Calu3 (cell line): ENCODE measurements at regions of chr3 and their contacts with region 1.

Region 1: GRCh38 chr3:177827511-177828207 is 630.4 kb upstream of the TBL1XR1 start:
- DNase-seq: peak; percentile 68
- H3K4me3 Mint-ChIP-seq: peak overlapping the region; percentile 48
- H3K27ac Mint-ChIP-seq: peak overlapping the region; percentile 85
- H3K4me1 Mint-ChIP-seq: peaks cover 77% of the 10 kb centered on the region
- H3K27me3 Mint-ChIP-seq: no peaks in the 10 kb centered on the region
- CTCF ChIP-seq: no peak

Region 2: DNA sequence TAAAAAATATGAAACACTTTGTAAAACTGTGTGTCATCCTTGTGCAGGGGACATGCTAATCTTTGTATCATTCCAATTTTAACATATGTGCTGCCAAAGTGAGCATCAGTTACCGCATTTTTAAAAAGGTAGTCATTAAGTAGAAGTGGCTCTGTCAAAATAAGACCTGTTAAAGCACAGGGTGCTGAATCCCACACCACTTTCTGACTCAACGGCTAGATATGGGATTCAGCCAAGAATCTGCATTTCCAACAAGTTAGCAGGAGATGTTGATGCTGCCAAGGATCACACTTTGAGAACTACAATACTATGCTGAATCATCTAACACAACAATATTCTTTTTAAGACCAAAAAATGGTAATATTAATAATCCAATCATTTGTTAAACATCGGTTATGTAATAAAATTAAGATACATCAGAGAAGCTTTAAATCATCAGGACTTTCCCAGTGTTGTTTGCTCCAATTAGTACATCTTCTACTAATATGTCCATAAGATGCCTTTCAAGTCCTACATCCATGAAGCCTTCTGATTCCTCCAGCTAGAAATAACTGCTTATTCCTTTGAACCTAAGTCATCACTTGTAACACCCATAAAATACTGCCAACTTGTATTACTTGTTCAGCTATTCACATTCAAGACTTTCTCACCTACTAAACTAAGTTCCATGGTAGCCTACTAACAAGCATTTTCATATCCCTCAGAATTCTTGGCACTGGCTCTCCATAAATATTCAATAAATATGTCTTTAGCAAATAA is 701.5 kb before region 1 on chr3:
- CTCF ChIA-PET with region 1: no interaction called
- intact Hi-C with region 1: loop called (anchors 5 kb)
- DNase-seq: no peak
- H3K4me3 Mint-ChIP-seq: no peak overlapping the region
- H3K27ac Mint-ChIP-seq: no peak overlapping the region
- H3K4me1 Mint-ChIP-seq: peaks cover 34% of the 10 kb centered on the region
- H3K27me3 Mint-ChIP-seq: no peaks in the 10 kb centered on the region
- CTCF ChIP-seq: no peak

Region 3: GRCh38 chr3:177928156-177928873 is 100.7 kb after region 1 on chr3:
- CTCF ChIA-PET with region 1: interaction called, 4 read pairs
- intact Hi-C with region 1: loop called (anchors 2 kb)
- DNase-seq: peak; percentile 21
- H3K4me3 Mint-ChIP-seq: peak overlapping the region; percentile 8
- H3K27ac Mint-ChIP-seq: peak overlapping the region; percentile 76
- H3K4me1 Mint-ChIP-seq: peaks cover 47% of the 10 kb centered on the region
- H3K27me3 Mint-ChIP-seq: no peaks in the 10 kb centered on the region
- CTCF ChIP-seq: no peak

Region 4: DNA sequence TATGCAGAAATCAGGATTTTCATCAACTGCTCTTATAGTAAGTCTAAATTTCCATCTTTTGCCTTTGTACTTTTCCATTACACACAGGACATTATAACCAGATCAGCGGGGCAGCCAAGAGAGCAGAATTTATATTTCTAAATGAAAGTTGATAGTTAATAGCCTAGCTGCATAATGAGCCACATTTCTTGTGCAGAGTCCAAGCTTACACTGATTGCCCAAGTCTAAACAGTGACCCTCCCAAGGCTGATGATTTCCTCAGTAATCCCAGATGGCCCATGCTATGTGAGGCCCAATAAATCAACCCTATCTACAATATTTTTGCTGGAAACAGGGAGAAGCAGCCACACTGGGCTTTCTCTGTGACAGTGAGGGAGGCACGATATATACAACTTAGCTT is 232.7 kb after region 1 on chr3:
- CTCF ChIA-PET with region 1: no interaction called
- intact Hi-C with region 1: no loop called
- DNase-seq: no peak
- H3K4me3 Mint-ChIP-seq: no peak overlapping the region
- H3K27ac Mint-ChIP-seq: no peak overlapping the region
- H3K4me1 Mint-ChIP-seq: no peaks in the 10 kb centered on the region
- H3K27me3 Mint-ChIP-seq: no peaks in the 10 kb centered on the region
- CTCF ChIP-seq: no peak